ENCODE measurements at regions of chr1 and their contacts with region 1.

Region 1: DNA sequence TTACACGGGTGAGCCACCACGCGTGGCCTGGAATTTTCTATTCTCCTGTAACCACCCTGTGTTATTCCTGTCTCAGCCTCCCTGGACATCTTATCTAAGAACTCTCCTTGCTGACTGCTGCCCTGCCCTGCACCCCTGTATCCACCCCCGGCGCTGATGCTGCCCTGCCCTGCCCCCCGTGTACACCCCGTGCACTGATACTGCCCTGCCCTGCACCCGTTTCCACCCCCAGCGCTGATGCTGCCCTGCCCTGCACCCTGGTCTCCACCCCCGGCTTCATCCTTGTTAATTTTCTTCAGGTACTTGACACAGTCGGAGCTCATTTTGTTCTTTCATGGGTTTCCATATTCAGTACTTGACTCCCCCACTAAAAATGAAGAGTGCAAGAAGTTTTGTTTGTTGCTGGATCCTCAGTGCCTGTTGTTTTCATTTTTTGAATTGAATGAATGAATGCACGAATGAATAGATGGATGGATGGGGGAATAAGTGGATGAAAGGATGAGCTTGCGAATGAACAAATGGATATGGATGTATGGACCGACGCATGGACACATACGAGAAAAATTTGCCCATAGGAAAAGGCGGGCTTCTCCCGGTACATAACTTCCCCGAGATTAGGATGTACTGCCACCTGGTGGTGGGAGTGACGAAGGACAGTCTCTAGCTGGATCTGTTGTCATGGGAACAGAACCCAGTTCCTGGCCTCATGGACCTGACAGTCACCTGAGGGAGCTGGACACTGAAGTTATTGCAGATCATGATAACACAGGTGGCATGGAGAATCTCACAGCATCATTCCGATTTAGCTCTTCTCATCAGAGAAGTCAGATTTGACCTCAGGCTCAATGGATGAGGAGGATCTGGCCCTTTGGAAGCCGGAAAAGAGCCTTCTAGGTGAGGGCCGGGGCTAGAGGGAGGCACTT is 14.9 kb downstream of the AADACL4 start:
- DNase-seq: peak; percentile 59 to 75
- ATAC-seq: peak; percentile 81 to 94 (median 87)
- H3K4me3 ChIP-seq: no peak overlapping the region
- H3K27ac ChIP-seq: no peak overlapping the region
- H3K4me1 ChIP-seq: no peaks in the 10 kb centered on the region
- H3K27me3 ChIP-seq: no peaks in the 10 kb centered on the region
- CTCF ChIP-seq: peak; percentile 98

Region 2: DNA sequence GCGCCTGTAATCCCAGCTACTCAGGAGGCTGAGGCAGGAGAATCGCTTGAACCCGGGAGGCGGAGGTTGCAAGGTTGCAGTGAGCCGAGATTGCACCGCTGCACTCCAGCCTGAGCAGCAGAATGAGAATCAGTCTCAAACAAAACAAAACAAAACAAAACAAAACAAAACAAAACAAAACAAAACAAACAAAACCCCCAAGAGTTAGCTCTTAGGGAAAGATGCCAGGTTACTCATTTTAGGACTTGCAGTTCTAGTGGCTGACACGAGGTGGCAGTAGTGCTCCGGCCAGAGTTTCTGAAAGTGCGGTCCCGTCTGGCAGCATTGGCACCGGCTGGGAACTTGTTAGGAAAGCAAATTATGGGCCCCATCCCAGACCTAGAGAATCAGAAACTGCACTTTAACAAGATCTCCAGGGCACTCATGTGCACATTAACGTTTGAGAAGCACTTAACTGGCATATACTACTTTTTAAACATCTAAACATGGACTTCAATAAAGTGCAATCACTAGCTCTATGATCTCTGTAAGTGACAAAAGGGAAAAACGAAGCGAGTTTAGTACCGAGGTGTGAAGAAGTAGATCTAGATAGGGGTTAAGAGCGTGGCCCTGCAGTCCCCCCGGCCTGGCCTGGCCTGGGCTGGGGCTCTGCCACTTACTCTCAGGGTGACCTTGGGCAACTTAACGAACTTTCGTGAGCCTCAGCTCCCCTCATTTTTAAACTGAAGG is 533.9 kb before region 1 on chr1:
- intact Hi-C with region 1: loop called in 1 of 2 experiments (anchors 10 kb)
- DNase-seq: peak; percentile 79 to 88
- ATAC-seq: peak; percentile 67 to 92 (median 83)
- H3K4me3 ChIP-seq: no peak overlapping the region
- H3K27ac ChIP-seq: peak overlapping the region; percentile 12
- H3K4me1 ChIP-seq: no peaks in the 10 kb centered on the region
- H3K27me3 ChIP-seq: no peaks in the 10 kb centered on the region
- CTCF ChIP-seq: peak; percentile 97

Region 3: DNA sequence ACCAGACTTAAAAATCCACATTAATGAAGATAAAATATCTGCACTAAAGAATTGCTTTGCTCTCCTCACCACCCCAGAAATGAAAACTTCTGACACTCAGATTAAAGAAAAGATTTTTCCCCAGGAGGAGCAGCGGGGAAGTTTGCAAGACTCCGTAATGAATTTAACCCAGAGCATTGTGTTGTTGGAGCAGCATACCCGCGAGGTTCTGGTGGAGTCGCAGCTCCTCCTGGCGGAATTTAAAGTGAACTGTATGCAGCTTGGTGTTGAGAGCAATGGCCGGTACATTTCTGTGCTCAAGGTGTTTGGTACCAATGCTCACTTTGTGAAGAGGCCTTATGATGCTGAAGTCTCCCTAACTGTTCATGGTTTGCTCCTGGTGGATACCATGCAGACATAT is 382.6 kb before region 1 on chr1:
- intact Hi-C with region 1: loop called in 1 of 2 experiments (anchors 5 kb)
- DNase-seq: no peak
- ATAC-seq: no peak
- H3K4me3 ChIP-seq: no peak overlapping the region
- H3K27ac ChIP-seq: no peak overlapping the region
- H3K4me1 ChIP-seq: peaks cover 6% of the 10 kb centered on the region
- H3K27me3 ChIP-seq: no peaks in the 10 kb centered on the region
- CTCF ChIP-seq: peak; percentile 37

Region 4: DNA sequence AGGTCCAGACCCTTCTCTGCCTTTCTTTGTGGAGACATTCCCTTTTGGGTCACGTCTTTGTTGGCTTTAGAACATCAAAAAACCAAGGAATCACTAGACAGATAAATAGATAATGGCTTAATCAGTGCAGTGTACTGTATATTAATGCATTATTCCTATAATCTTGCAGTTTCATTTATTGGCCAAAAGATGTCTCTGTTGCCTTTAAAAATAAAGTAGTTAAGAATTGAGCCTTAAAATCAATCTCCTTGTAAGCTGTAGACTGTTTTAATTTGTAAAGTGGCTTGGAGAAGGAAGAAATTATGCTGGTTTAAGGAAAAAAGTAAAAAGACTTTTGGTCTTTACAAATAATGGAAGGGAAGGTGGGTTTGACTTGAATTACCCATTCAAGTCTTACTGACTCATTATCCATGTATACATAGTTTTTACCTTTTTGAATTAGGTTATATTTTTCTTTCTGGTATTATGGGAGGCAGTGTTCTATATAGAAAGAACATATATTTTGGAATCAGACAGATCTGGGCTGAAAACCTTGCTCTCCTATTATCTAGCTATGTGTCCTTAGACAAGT is 344.4 kb before region 1 on chr1:
- intact Hi-C with region 1: loop called in 1 of 2 experiments (anchors 5 kb)
- DNase-seq: no peak
- ATAC-seq: peak in 1 of 4 donors; percentile 40
- H3K4me3 ChIP-seq: no peak overlapping the region
- H3K27ac ChIP-seq: no peak overlapping the region
- H3K4me1 ChIP-seq: peaks cover 17% of the 10 kb centered on the region
- H3K27me3 ChIP-seq: no peaks in the 10 kb centered on the region
- CTCF ChIP-seq: peak; percentile 46

Measured in psoas muscle (tissue), 8 donors.